GM23248 (cell line): ENCODE measurements at regions of chr7 and their contacts with region 1.

Region 1: GRCh38 chr7:6008668-6009611 is at the starts of genes AIMP2 and PMS2:
- DNase-seq: peak; percentile 99
- H3K4me3 ChIP-seq: peak within 1 kb of the TSS; percentile 95
- H3K27ac ChIP-seq: peak within 1 kb of the TSS; percentile 88
- H3K4me1 ChIP-seq: peaks cover 24% of the 10 kb centered on the region
- H3K27me3 ChIP-seq: no peaks in the 10 kb centered on the region
- total RNA-seq, gene AIMP2: 57.7 and 74.6 TPM in 2 replicates
- total RNA-seq, gene PMS2: 12.8 and 17.1 TPM in 2 replicates

Region 2: DNA sequence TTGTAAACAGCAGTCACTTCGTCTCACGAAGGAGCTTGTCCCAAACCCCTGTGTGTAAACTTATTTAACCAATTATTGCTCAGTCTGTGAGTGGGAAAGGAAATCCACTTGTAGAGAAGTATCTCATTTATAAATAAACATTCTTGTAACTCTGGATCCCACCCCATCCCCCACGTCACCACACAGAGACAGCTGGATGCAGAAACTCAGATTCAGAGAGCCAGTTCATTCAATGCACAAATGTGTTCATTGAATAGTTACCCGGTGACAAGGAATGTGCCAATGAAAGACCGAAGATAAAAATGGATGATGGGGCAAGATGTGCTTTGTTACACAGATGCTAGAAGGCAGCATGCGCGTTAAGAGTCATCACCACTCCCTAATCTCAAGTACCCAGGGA is 136.6 kb before region 1 on chr7:
- in situ Hi-C with region 1: loop called (anchors 25 kb)
- DNase-seq: no peak
- H3K4me3 ChIP-seq: no peak overlapping the region
- H3K27ac ChIP-seq: no peak overlapping the region
- H3K4me1 ChIP-seq: no peaks in the 10 kb centered on the region
- H3K27me3 ChIP-seq: no peaks in the 10 kb centered on the region

Region 3: GRCh38 chr7:6323967-6324701 is 315.2 kb after region 1 on chr7:
- in situ Hi-C with region 1: loop called (anchors 10 kb)
- DNase-seq: no peak
- H3K4me3 ChIP-seq: no peak overlapping the region
- H3K27ac ChIP-seq: no peak overlapping the region
- H3K4me1 ChIP-seq: no peaks in the 10 kb centered on the region; the same call in 1 of the 2 replicates
- H3K27me3 ChIP-seq: no peaks in the 10 kb centered on the region